ENCODE measurements at regions of chr20 and their contacts with region 1.

Region 1: DNA sequence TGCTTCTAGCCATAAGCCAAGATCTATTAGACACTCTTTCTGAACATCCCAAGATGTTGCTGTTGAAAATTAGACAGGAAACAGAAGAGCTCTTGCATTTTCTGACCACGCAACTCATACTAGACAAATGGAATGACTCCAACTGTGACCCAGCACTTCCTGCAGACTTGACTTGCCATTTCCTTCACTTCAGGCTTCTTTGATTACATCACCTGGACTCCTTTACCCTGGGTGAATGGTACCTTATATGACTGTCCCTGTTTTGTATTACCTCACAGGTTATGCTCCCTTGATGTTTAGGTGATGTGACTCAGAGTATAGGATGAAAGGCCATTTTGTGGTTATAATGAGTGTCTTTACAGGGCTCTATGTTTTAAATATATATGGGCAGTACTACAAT is 236.1 kb downstream of the BMP2 start:
- DNase-seq: no peak
- ATAC-seq: no peak

Region 2: DNA sequence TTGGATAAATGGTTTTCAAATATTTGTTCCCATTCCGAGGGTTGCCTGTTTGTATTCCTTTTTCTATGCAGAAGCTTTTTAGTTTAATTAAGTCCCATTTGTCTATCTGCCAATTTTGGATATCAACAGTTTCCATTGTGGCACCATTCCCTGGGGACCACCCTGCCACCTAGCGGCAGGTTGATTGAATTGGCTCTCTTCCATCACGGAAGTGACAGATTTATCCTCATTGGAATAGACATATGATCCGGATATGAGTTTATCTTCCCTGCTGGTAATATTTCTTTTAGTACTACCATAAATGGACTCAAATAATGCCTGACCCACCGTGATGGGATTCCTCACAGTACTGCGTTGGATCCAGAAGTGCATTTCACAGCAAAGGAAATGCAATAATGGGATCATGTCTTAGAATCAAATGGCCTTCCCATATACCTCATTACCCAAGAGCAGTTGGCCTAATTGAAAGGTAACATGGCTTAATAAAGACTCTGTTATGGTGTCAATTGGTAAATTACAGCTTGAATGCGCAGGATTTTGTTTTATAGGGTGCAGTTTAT is 90.9 kb after region 1 on chr20:
- intact Hi-C with region 1: loop called (anchors 1 kb)
- DNase-seq: no peak
- ATAC-seq: no peak

Measured in Right ventricle myocardium inferior (tissue), 1 donor.